ENCODE measurements at regions of chrX and their contacts with region 1.

Region 1: GRCh38 chrX:70960728-70961127 is 29.8 kb upstream of the SLC7A3 start:
- DNase-seq: no peak

Region 2: DNA sequence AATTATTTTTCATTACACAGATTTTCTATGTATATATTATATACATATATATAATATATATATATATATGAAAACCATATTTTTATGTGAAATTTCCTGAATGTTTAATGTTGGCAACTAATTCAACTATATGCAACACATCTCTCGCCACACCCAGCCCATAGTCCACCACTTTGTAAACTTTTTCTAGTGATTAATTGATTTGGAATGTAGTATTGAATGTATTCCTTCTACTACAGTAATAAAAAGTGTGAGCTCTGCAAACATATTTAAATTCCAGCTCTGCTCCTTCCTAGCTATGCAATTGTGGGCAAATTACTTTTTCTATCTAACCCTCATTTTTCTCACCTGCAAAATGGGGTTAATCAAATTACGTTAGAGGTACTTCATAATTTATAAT is 240.0 kb before region 1 on chrX:
- intact Hi-C with region 1: no loop called
- DNase-seq: no peak

Region 3: DNA sequence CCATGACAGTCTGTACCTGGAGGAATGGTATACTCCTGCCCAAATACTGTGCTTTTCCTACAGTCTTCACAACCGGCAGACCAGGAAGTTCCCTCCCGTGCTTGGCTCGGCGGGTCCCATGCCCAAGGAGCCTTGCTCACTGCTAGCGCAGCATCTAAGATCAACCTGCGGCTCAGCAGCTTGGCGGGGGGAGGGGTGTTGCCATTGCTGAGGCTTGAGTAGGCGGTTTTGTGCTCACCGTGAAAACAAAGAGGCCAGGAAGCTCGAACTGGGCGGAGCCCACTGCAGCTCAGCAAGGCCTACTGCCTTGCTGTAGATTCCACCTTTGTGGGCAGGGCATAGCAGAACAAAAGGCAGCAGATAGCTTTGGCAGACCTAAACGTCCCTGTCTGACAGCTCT is 204.9 kb before region 1 on chrX:
- intact Hi-C with region 1: no loop called
- DNase-seq: no peak

Region 4: GRCh38 chrX:70769659-70770232 is 191.0 kb before region 1 on chrX:
- intact Hi-C with region 1: loop called (anchors 5 kb)
- DNase-seq: no peak

Region 5: DNA sequence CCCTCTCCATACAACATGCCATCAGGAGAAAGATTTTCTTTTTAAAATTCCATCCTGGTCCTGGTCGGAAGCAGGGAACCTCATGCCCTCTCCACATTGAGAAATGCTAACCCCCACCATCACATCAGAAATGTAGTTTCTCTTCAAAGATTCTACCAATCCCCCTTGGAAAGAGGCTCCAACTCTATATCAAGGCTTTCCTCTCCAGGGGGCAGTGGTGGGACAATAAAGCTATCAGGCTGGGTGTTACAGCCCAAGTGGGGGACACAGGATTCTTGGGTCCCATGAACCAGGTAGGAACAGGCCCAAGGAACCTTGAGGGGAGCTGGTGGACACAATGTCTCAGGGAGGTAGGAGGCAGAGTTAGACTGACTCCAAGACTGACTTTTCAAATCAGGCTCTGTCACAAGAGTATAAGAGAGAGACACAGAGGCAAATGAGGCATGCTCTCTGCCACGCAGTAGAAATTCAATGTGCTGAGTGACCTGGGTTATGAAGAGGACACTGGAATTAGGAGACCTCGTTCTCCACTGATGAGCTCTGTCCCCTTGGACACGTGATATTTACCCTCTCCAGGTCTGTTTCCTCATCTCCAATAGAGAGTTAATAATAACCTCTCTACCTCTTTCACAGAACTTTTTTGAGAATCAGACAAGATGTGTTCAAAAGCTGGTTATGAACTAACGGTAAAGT is 266.8 kb after region 1 on chrX:
- intact Hi-C with region 1: no loop called
- DNase-seq: no peak

Measured in posterior cingulate gyrus (tissue), 11 donors.